Mucosa of descending colon (tissue), 3 donors: ENCODE measurements at regions of chr10 and their contacts with region 1.

Region 1: DNA sequence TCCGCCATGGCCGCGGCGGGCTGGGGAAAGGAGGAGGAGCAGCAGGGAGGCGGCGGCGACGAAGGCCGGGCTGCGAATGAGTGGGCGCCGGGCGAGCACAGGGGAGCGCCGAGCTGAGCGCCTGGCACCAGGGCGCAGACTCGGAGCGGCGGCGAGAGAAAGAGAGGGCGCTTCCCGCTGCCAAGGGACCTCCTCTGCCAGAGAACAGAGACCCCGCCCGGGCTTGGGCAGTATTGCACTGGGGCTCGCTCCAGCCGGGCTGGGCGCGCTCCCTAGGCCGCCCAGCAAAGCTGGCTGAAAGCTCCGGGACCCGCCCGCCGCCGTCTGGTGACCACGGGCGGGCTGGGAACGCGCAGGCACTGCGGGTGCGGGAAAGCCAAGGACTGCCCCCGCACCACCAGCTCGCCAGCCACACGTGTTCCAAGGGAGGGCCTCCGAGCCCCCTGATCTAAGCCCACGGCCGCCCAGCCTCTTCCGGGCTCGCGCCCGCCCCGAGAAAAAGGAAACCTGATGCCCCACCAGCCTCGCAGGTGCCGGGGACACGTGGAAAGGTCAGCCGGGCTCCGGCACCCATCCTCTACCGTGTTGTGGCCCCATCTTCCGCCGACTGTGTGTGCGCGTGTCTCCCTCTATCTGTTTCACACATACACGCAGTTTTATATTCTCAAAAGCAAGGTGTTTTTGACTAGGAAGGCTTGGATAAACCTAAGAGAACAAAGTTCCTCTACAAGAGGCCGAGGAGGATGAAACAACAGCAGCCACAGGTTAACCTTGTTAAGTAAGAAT is at the start of gene CCDC6:
- DNase-seq: peak; percentile 95 to 97 (median 96)
- ATAC-seq: peak; percentile 93
- H3K4me3 ChIP-seq: peak within 1 kb of the TSS; percentile 89
- H3K4me1 ChIP-seq: peaks cover 29% of the 10 kb centered on the region
- CTCF ChIP-seq: peak; percentile 86
- total RNA-seq, gene CCDC6: 54.5 to 73.1 (median 62.7) TPM

Region 2: DNA sequence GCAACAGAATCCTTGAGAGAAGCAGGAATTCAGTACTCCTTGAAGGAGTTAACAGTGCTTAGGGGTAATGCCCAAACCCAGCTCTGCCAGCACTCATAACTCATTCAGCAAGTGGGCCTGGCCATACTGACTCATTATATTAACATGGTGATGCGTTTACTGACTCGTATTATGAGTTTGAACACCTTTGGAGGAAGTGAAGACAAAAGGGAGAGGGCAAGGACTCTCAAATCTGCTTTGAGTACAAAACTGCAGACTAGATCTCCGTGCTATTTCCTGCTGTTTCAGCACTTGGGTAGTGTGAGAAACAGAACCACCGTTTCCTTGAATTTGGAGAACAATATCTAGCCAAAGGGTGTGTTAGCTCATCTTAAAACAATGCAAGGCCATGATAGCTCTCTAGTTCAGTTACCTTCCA is 227.7 kb before region 1 on chr10:
- intact Hi-C with region 1: no loop called
- DNase-seq: peak in 2 of 3 donors; percentile 36 to 65
- ATAC-seq: peak; percentile 50
- H3K4me3 ChIP-seq: no peak overlapping the region
- H3K4me1 ChIP-seq: peaks cover 1% of the 10 kb centered on the region
- CTCF ChIP-seq: no peak

Region 3: GRCh38 chr10:59865101-59865500 is 41.5 kb before region 1 on chr10:
- intact Hi-C with region 1: loop called in 1 of 2 experiments (anchors 2 kb)
- DNase-seq: peak in 2 of 3 donors; percentile 38 to 85
- ATAC-seq: peak; percentile 88
- H3K4me3 ChIP-seq: no peak overlapping the region
- H3K4me1 ChIP-seq: peaks cover 38% of the 10 kb centered on the region
- CTCF ChIP-seq: peak; percentile 24